ENCODE measurements at regions of chr5 and their contacts with region 1.

Region 1: GRCh38 chr5:151815051-151815450 is 43.3 kb downstream of the G3BP1 start:
- DNase-seq: no peak
- H3K4me3 ChIP-seq: no peak overlapping the region
- H3K27me3 ChIP-seq: no peaks in the 10 kb centered on the region
- CTCF ChIP-seq: no peak

Region 2: GRCh38 chr5:151345808-151346478 is 469.1 kb before region 1 on chr5:
- CTCF ChIA-PET with region 1: no interaction called
- POLR2A ChIA-PET with region 1: no interaction called
- DNase-seq: no peak
- H3K4me3 ChIP-seq: no peak overlapping the region
- H3K27me3 ChIP-seq: peaks cover 7% of the 10 kb centered on the region
- CTCF ChIP-seq: no peak

Region 3: DNA sequence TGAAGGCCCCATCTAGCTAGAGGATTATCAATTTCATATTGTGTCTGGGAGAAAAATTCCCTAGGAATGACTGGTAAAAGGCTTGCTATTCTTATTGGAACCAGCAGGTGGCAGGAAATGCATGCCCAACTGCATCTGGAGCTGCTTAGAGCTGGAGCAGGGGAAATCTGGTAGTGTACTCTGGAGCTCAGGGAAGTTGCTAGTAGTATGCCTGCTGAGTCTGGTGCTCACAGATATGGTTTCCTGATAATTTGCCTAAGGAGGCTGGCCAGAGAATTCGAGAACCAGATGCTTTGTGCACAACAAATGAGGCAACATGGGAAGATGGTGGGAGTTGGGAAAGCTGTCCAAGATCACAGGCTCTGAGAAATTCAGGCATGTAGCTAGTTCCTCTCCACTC is 10.4 kb after region 1 on chr5:
- CTCF ChIA-PET with region 1: interaction called, 22 read pairs
- POLR2A ChIA-PET with region 1: no interaction called
- DNase-seq: peak; percentile 13
- H3K4me3 ChIP-seq: no peak overlapping the region
- H3K27me3 ChIP-seq: no peaks in the 10 kb centered on the region
- CTCF ChIP-seq: peak; percentile 89

Measured in BJ (cell line).